ENCODE measurements at regions of chr11 and their contacts with region 1.

Region 1: GRCh38 chr11:86608251-86608799 is 64.1 kb downstream of the ME3 start:
- H3K4me3 ChIP-seq: no peak overlapping the region
- H3K27ac ChIP-seq: no peak overlapping the region
- H3K4me1 ChIP-seq: peaks cover 4% of the 10 kb centered on the region; the same call in 1 of the 2 replicates
- CTCF ChIP-seq: peak; percentile 77

Region 2: GRCh38 chr11:85977751-85978160 is 630.6 kb before region 1 on chr11:
- CTCF ChIA-PET with region 1: no interaction called
- POLR2A ChIA-PET with region 1: no interaction called
- H3K4me3 ChIP-seq: no peak overlapping the region
- H3K27ac ChIP-seq: no peak overlapping the region
- H3K4me1 ChIP-seq: no peaks in the 10 kb centered on the region
- CTCF ChIP-seq: no peak

Region 3: DNA sequence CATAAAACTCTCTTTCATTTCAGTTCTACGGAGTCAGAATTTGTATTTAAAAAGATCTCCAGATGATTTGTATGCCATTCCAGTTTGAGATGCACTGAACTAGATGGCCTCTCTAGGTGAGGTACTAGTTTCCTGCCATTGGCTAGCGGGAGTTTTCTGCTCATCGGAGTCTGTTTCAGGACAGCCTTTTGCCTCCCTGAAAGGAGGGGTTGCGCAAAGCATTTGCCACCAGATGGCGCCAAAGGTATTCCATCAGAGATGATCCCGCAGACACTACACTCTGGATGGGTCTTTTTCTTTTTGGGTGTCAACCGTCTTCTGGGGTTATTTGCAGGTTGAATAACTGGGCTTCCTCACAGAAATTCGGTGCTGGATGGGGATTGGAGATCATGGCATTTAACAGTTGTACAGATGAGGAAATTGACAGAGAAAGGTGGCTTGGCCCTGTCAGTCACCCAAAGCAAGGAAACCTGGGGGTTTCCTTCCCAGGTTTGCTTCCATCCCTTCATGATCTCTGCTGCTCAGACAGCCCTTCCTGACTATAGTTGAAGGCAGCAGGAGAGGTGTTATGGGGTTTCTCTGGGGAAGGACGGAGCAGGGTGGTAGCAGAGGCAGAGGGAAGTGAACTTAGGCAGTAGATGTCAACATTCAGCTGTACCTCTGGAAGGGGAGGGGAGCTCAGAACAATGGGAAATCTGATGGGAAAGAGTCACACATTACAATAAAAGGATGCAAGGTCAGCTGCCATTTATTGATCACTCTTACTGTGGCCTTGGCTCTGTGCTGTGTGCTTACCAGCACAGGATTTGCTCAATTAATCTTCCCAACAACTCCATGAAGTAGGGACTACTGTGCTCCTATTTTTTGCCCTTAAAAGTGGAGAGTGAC is 152.0 kb before region 1 on chr11:
- CTCF ChIA-PET with region 1: interaction called, 21 read pairs
- POLR2A ChIA-PET with region 1: no interaction called
- H3K4me3 ChIP-seq: no peak overlapping the region
- H3K27ac ChIP-seq: no peak overlapping the region
- H3K4me1 ChIP-seq: peaks cover 4% of the 10 kb centered on the region; the same call in 1 of the 2 replicates
- CTCF ChIP-seq: peak; percentile 67; the same call in 1 of the 2 replicates

Region 4: DNA sequence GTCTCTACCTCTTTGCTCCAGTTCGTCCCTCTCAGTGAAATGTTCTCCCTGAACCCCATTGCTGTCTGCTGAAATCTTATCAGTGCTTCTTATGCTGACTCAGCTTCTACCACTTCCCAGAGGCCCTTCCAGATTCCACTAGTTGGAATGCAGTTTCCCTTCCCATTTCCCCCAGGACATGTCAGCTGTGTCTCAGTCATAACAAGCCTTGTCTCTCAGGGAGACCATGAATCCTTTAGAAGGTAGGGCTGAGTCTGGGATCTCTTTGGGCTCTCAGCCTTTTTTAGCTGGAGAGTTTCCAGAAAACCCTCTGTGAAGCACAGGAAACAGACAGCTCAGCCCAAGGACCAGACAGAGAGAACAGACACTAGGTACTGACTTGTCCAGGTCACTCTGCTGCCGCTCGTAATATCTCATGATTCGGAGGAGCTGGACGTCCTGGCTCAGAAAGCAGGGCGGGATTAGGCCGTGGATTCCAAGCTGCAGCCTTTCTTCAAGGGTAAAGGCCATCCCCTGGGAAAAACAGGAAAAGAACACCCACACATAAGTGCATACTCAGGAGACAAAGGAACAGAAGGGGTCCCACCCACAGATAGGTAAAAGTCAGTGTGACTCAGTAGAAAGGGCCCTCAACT is 48.9 kb before region 1 on chr11:
- CTCF ChIA-PET with region 1: interaction called, 12 read pairs
- POLR2A ChIA-PET with region 1: no interaction called
- H3K4me3 ChIP-seq: no peak overlapping the region
- H3K27ac ChIP-seq: no peak overlapping the region
- H3K4me1 ChIP-seq: 0 out of 2 replicates have a peak, but pooled peaks cover 2% of the 10 kb centered on the region
- CTCF ChIP-seq: no peak

Region 5: DNA sequence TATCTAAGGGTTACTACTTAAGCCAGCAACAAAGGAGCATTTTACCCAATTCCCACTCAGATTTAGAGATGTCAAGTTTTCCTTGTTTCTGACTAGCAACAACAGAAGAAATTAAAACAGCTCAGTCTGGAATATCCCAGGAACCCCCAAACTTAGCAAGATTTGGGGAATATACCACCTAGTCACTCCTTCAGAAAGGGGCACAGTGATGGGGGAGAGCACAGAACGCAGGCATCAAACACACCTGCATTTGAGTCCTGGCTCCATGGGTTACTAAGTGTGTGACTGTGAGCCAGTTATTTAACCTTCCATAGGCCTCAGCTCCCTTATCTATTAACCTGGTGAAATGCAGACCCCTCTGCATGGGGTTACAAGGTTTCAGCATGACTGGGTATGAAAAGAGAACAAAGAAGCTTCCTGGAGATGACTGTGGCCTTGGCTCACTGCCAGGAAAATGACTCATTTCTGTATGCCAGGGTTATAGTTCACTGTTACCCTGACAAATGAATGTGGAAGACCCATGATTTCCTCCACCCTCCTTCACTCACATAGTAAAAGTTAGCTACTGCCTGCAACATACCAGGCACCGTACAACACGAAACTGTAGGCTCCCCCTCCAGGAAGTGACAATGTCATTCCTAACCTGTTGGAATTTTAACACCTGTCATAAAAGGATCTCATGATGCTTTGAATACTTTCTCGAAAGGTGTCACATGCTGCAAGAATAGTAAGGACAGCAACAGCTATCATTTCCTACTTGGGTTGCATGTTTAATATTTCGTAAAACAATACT is 15.5 kb before region 1 on chr11:
- CTCF ChIA-PET with region 1: interaction called, 48 read pairs
- POLR2A ChIA-PET with region 1: interaction called, 3 read pairs
- H3K4me3 ChIP-seq: no peak overlapping the region
- H3K27ac ChIP-seq: peak overlapping the region; percentile 58
- H3K4me1 ChIP-seq: 0 out of 2 replicates have a peak, but pooled peaks cover 6% of the 10 kb centered on the region
- CTCF ChIP-seq: no peak

Region 6: DNA sequence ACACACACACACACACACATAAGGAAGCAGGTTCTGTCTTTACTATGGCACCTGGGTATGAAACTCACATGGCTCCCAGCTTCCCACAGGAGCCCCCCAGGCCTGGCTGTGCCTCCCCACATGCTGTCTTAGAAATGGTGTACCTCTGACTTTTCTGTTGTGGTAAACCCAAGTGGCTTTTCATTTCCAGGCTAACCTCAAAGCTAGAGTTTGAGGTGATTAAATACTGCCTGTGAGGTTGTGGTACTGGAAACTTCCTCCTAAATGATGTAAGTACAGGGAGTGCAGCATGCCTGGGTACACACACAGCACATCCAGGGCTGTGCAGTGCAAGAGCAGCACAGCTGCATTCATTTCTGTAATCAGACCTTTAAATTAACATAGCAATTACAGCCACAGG is 29.7 kb after region 1 on chr11:
- CTCF ChIA-PET with region 1: interaction called, 17 read pairs
- POLR2A ChIA-PET with region 1: no interaction called
- H3K4me3 ChIP-seq: no peak overlapping the region
- H3K27ac ChIP-seq: no peak overlapping the region
- H3K4me1 ChIP-seq: no peaks in the 10 kb centered on the region
- CTCF ChIP-seq: no peak

Region 7: DNA sequence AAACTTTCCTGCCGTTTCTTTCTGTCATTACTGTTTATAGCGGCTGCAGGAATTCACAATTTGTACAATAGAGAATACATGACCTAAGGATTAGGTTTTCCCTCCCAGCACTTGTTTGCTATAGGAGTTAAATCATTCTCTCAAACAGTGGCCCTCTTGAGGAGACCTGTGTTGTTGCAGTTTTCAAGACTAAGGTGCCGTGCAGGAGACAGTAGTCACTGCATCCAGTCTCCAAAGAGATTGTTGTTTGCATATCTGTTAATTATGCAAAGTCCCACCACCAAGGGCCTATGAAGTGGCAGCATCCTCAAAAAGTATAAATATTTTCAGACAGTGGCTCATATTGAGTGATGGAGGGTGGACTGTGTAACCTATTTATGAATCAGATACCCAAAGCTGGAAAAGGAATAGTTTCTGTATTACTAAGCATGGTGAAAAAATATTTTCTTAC is 194.3 kb after region 1 on chr11:
- CTCF ChIA-PET with region 1: interaction called, 18 read pairs
- POLR2A ChIA-PET with region 1: interaction called, 3 read pairs
- H3K4me3 ChIP-seq: peak overlapping the region; percentile 12; the same call in 1 of the 2 replicates
- H3K27ac ChIP-seq: no peak overlapping the region
- H3K4me1 ChIP-seq: peaks cover 4% of the 10 kb centered on the region
- CTCF ChIP-seq: no peak